ENCODE measurements at regions of chr5 and their contacts with region 1.

Region 1: DNA sequence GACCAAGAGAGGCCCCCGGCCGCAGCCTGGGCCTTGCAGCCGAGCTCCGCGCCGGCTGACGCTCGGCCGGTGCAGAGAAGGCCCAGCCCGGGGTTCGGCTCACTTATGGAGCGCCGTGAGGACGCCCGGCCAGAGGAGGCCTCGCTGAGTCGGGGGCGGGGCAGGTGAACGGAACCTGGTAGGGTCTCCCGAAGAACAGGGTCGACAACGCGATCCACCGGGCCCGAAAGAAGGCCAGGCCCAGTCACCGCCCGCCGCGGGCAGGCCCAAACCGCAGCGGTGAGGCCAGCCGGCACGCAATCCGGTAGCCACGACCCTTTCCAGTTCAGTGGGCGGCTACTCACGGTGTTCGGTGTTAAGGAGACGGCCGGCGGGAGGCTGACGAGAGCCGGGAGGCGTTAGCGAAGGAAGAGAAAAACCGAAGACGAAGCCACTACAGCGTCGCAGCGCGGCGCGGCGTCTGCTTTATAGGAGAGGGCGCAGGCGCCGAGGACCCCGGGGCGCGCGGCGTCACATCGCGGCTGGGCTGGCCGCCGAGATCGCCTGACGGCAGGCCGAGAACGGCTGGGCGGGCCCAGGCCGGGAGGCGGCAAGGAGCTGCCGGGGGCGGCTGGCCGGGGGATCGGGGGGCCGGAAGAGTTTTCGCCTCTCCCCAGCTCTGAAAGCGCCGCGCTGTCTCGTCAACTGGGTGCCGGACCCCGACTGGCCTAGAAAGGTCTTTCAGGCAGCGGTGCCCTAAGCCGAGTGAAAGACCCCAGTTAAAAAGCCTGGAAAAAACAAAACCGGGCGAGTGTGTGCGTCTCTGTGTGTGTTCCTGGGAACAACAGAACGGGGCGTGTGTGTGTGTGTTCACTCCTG is at the start of gene SKP1:
- DNase-seq: peak; percentile 85
- H3K4me3 Mint-ChIP-seq: peak within 1 kb of the TSS; percentile 97
- H3K27ac Mint-ChIP-seq: peak within 1 kb of the TSS; percentile 98
- H3K4me1 Mint-ChIP-seq: peaks cover 23% of the 10 kb centered on the region
- H3K27me3 Mint-ChIP-seq: peaks cover 8% of the 10 kb centered on the region
- total RNA-seq, gene SKP1: 254 and 257 TPM in 2 replicates

Region 2: DNA sequence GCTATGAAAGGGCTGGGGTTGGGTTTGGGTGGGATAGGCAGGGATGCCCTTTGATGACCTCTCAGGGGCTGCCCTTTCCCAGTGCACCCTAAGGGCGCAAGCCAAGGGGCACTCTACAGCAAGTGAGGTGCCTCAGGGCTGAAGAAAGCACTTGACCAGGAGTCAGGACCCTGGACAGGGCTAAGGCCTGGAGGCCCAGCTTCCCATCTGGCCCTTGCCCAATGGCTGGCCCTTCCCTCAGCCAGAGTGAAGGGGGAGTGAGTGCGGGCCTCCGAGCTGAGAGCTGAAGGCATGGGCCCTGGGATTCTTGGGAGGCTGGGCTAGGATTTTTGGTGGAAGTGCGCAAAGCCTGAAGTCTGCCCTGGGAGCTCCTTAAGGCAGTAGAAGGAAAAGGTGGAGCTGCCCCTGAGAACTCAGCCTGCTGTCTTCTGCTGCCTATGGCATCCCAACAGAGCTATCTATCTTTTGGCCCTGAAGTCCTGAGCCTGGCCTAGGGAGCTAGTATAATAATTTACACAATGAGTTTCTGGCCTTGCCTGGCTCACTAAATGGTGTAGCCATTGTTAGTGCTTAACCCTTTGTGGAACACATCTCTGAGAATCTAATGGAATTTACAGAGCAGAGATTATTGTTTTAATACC is 365.1 kb after region 1 on chr5:
- intact Hi-C with region 1: no loop called
- DNase-seq: no peak
- H3K4me3 Mint-ChIP-seq: no peak overlapping the region
- H3K27ac Mint-ChIP-seq: no peak overlapping the region
- H3K4me1 Mint-ChIP-seq: peaks cover 33% of the 10 kb centered on the region
- H3K27me3 Mint-ChIP-seq: no peaks in the 10 kb centered on the region

Region 3: GRCh38 chr5:134758504-134759341 is 582.0 kb after region 1 on chr5 and contains the start of gene DDX46:
- intact Hi-C with region 1: loop called (anchors 5 kb)
- DNase-seq: peak; percentile 94
- H3K4me3 Mint-ChIP-seq: peak within 1 kb of the TSS; percentile 100
- H3K27ac Mint-ChIP-seq: peak within 1 kb of the TSS; percentile 97
- H3K4me1 Mint-ChIP-seq: peaks cover 24% of the 10 kb centered on the region
- H3K27me3 Mint-ChIP-seq: no peaks in the 10 kb centered on the region
- total RNA-seq, gene DDX46: 75.2 and 83.9 TPM in 2 replicates

Measured in activated T-helper 2 cell treated with anti-CD3 and anti-CD28 coated beads, Interferon-gamma antibody, Interleukin-2, Interleukin-4, amounts not matched to agents 10 μg/mL and 5 μg/mL and 100 μg/mL, durations not matched to agents 14 hours and 24 hours and 36 hours (primary cell).